ENCODE measurements at regions of chr12 and their contacts with region 1.

Region 1: GRCh38 chr12:56041552-56042429 is at the start of gene RPS26:
- DNase-seq: peak; percentile 89

Region 2: GRCh38 chr12:56029666-56030293 is 12.0 kb before region 1 on chr12:
- CTCF ChIA-PET with region 1: interaction called, 10 read pairs
- POLR2A ChIA-PET with region 1: interaction called, 5 read pairs
- DNase-seq: peak; percentile 63

Measured in HEK293T (cell line).